ENCODE measurements at regions of chr15 and their contacts with region 1.

Region 1: DNA sequence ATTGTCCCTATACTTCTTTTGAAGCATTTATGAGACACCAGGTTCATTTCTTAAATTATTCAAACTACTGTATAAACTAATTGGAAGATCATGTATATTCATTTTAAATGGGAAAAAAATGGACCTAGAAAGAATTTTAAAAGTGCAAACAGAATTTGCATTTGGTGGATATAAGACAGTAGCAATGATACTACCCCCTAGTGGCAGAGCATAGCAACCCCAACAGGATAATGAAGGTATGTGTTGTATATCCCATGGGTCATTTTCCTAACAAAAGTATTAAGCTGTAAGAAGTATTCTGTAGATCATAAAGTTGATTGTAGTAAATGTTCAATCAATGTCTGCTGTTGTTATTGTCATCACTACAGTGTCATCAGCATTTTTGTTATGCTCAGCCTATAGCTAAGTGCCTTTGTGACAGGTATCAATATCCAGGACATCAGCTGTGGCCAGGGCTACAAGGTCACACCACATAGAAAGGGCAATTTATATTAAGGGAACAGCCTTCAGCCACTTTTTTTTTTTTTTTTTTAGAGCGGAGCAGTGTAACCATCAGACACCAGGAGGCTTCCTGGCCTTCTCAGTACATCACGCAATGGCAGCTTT is 175.8 kb downstream of the FOXB1 start:
- DNase-seq: peak in 7 of 9 donors; percentile 19 to 52 (median 41)
- ATAC-seq: peak; percentile 73
- H3K4me3 ChIP-seq: no peak overlapping the region
- H3K4me3 Mint-ChIP-seq: no peak overlapping the region
- H3K27ac ChIP-seq: no peak overlapping the region
- H3K27ac Mint-ChIP-seq: no peak overlapping the region
- H3K4me1 ChIP-seq: no peaks in the 10 kb centered on the region
- H3K4me1 Mint-ChIP-seq: no peaks in the 10 kb centered on the region
- H3K27me3 ChIP-seq: no peaks in the 10 kb centered on the region
- H3K27me3 Mint-ChIP-seq: peaks cover 2 to 49% (median 9%) of the 10 kb centered on the region in 5 donors

Region 2: DNA sequence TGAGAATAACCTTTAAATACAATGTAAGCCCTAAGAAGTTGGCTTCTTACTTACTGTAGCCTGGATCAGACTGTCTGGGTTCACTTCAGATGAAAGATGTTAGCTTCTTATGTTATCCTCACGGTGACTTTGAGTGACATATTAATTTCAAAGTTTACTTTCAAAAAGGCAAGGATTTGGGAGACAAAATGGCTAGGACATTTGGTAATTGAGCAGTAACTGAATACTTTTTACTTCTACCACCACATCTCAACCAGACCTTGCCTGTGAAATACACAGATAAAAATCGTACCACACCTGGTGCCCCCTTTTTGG is 454.8 kb before region 1 on chr15:
- CTCF ChIA-PET with region 1: interaction called, 5 read pairs
- POLR2A ChIA-PET with region 1: no interaction called
- intact Hi-C with region 1: loop called (anchors 1 kb)
- DNase-seq: no peak
- ATAC-seq: no peak
- H3K4me3 ChIP-seq: no peak overlapping the region
- H3K4me3 Mint-ChIP-seq: no peak overlapping the region
- H3K27ac ChIP-seq: no peak overlapping the region
- H3K27ac Mint-ChIP-seq: no peak overlapping the region
- H3K4me1 ChIP-seq: no peaks in the 10 kb centered on the region
- H3K4me1 Mint-ChIP-seq: peaks cover 0 to 3% (median 0%) of the 10 kb centered on the region in 7 donors
- H3K27me3 ChIP-seq: no peaks in the 10 kb centered on the region
- H3K27me3 Mint-ChIP-seq: peaks cover 0 to 30% (median 0%) of the 10 kb centered on the region in 5 donors

Region 3: GRCh38 chr15:59997070-59997701 is 182.7 kb before region 1 on chr15:
- CTCF ChIA-PET with region 1: no interaction called
- POLR2A ChIA-PET with region 1: no interaction called
- intact Hi-C with region 1: loop called in 1 of 2 experiments (anchors 5 kb)
- DNase-seq: peak in 5 of 9 donors; percentile 34 to 74 (median 51)
- ATAC-seq: peak; percentile 70
- H3K4me3 ChIP-seq: no peak overlapping the region
- H3K4me3 Mint-ChIP-seq: peak overlapping the region; percentile 32 to 82 (median 48)
- H3K27ac ChIP-seq: no peak overlapping the region
- H3K27ac Mint-ChIP-seq: peak overlapping the region in 2 of 9 donors; percentile 10 to 69
- H3K4me1 ChIP-seq: peaks cover 7 to 19% of the 10 kb centered on the region in 2 donors
- H3K4me1 Mint-ChIP-seq: peaks cover 24 to 73% (median 48%) of the 10 kb centered on the region in 7 donors
- H3K27me3 ChIP-seq: peaks cover 41 to 85% of the 10 kb centered on the region in 2 donors
- H3K27me3 Mint-ChIP-seq: peaks cover 87 to 98% (median 93%) of the 10 kb centered on the region in 5 donors

Region 4: GRCh38 chr15:60195611-60196010 is 15.7 kb after region 1 on chr15:
- CTCF ChIA-PET with region 1: no interaction called
- POLR2A ChIA-PET with region 1: interaction called, 10 read pairs
- intact Hi-C with region 1: no loop called
- DNase-seq: no peak
- ATAC-seq: no peak
- H3K4me3 ChIP-seq: no peak overlapping the region
- H3K4me3 Mint-ChIP-seq: no peak overlapping the region
- H3K27ac ChIP-seq: no peak overlapping the region
- H3K27ac Mint-ChIP-seq: no peak overlapping the region
- H3K4me1 ChIP-seq: no peaks in the 10 kb centered on the region
- H3K4me1 Mint-ChIP-seq: peaks cover 0 to 1% (median 0%) of the 10 kb centered on the region in 7 donors
- H3K27me3 ChIP-seq: peaks cover 0 to 3% of the 10 kb centered on the region in 2 donors
- H3K27me3 Mint-ChIP-seq: peaks cover 34 to 76% (median 60%) of the 10 kb centered on the region in 5 donors

Region 5: DNA sequence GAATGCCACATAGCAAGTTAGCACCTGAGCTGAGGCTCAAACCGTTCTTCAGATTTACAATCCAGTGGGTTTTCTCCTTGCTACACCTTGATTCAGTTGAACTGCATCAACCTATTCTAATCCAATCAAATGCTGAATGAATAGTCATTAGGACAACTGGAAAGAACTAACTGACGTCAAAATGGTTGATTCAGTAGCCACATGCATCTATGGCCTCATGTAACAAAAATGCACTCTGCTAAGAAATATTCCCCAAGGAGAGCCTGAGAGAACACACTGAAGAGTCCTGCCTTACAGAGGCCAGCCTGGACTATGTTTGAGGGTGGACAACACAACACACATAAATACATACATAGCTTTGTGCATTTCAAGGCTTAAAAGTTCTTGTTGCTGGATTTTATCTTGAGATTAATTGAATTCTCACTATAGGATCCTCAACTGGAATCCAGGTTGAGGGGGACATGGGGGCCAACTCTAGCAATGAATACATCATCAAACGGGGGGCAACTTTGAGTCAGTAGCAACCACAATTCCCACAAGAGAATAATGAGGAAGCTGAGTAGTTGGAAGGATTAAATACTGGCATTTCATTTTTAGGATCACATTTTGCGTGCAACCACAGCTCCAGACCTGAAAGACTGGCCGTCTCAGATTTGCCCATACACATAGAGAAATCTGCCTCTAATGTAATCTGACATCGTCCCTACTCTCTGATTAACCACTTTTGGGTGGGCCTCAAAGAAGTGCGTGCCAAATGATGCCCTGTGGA is 579.3 kb after region 1 on chr15:
- CTCF ChIA-PET with region 1: no interaction called
- POLR2A ChIA-PET with region 1: no interaction called
- intact Hi-C with region 1: no loop called
- DNase-seq: no peak
- ATAC-seq: no peak
- H3K4me3 ChIP-seq: no peak overlapping the region
- H3K4me3 Mint-ChIP-seq: no peak overlapping the region
- H3K27ac ChIP-seq: no peak overlapping the region
- H3K27ac Mint-ChIP-seq: no peak overlapping the region
- H3K4me1 ChIP-seq: no peaks in the 10 kb centered on the region
- H3K4me1 Mint-ChIP-seq: peaks cover 3 to 15% (median 9%) of the 10 kb centered on the region in 7 donors
- H3K27me3 ChIP-seq: no peaks in the 10 kb centered on the region
- H3K27me3 Mint-ChIP-seq: peaks cover 0 to 6% (median 0%) of the 10 kb centered on the region in 5 donors

Measured in naive thymus-derived CD4-positive, alpha-beta T cell (primary cell).